PC-3 (cell line): ENCODE measurements at regions of chr4 and their contacts with region 1.

Region 1: GRCh38 chr4:185395956-185396723 is 416 bp upstream of the LRP2BP start:
- DNase-seq: peak; percentile 96
- ATAC-seq: peak; percentile 78
- H3K4me3 ChIP-seq: peak overlapping the region; percentile 82
- H3K27ac ChIP-seq: peak overlapping the region; percentile 95
- H3K4me1 ChIP-seq: peaks cover 26% of the 10 kb centered on the region
- H3K27me3 ChIP-seq: no peaks in the 10 kb centered on the region
- CTCF ChIP-seq: no peak

Region 2: GRCh38 chr4:185165605-185166063 is 230.5 kb before region 1 on chr4:
- CTCF ChIA-PET with region 1: no interaction called
- POLR2A ChIA-PET with region 1: no interaction called
- intact Hi-C with region 1: no loop called
- DNase-seq: no peak
- ATAC-seq: no peak
- H3K4me3 ChIP-seq: no peak overlapping the region
- H3K27ac ChIP-seq: no peak overlapping the region
- H3K4me1 ChIP-seq: no peaks in the 10 kb centered on the region
- H3K27me3 ChIP-seq: no peaks in the 10 kb centered on the region
- CTCF ChIP-seq: no peak

Region 3: DNA sequence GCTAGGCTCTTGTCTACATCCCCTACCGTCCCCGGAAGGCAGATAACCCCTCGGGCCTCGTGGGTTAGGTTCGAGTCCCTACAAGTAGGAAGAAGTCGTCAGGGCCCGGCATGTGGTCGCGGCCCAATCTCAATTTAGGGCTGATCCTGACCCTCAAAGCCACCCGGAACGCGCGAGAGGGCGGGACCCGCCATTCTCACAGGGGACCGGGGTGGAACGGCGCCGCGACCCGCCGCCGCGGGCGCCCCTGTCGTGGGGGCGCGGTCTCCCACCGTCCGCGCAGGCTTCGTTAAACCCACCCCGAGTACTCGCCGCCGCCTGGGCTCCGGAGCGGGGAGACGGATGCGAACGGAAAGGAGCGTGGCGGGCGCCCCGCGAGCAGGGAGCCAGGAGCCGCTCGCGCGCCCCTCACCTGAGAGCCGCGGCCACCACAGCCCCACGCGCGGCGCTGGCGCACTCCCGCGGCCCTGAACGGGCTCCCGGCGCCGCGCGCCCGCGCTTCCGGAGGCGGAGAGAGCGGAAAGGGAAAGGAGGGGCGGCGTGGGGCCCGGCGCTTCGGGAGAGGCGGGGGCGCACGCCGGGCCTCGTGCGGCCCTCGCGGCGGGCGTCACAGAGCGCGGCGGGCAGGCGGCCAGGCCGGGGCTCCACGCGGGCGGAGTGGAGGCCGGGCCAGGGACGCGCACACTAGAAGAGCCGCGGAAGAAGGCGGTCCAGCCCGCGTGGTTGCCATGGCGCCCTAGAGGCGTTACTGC is 192.5 kb before region 1 on chr4 and contains the start of gene CFAP97:
- CTCF ChIA-PET with region 1: no interaction called
- POLR2A ChIA-PET with region 1: no interaction called
- intact Hi-C with region 1: loop called (anchors 5 kb)
- DNase-seq: peak; percentile 77
- ATAC-seq: peak; percentile 83
- H3K4me3 ChIP-seq: peak within 1 kb of the TSS; percentile 69
- H3K27ac ChIP-seq: peak within 1 kb of the TSS; percentile 20
- H3K4me1 ChIP-seq: peaks cover 29% of the 10 kb centered on the region
- H3K27me3 ChIP-seq: no peaks in the 10 kb centered on the region
- CTCF ChIP-seq: no peak
- total RNA-seq, gene CFAP97: 10.5 and 12.4 TPM in 2 replicates

Region 4: GRCh38 chr4:185425647-185426352 is 29.7 kb after region 1 on chr4 and contains the start of gene UFSP2:
- CTCF ChIA-PET with region 1: no interaction called
- POLR2A ChIA-PET with region 1: interaction called, 3 read pairs
- intact Hi-C with region 1: loop called (anchors 2 kb)
- DNase-seq: peak; percentile 72
- ATAC-seq: peak; percentile 89
- H3K4me3 ChIP-seq: peak within 1 kb of the TSS; percentile 95
- H3K27ac ChIP-seq: peak within 1 kb of the TSS; percentile 83
- H3K4me1 ChIP-seq: peaks cover 5% of the 10 kb centered on the region
- H3K27me3 ChIP-seq: no peaks in the 10 kb centered on the region
- CTCF ChIP-seq: no peak
- total RNA-seq, gene UFSP2: 24.6 and 27.0 TPM in 2 replicates